GM12878 (cell line): ENCODE measurements at regions of chr1 and their contacts with region 1.

Region 1: DNA sequence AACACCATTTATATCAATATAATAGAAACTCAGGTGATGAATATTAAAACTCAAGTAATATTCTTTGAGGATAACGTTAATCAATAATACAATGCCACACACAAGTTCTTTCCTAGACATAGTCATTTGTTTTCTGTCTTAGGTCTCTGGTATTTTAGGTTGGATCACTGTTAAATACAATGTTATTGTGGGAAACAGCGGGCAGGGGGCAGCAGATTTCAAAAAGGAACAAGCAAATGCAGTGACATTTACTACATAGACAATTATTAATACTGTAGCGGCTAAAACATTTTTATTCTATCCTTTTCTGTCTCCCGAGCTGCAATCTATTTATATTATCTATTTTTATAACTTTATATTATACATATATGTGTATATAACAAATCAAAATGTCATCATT is 186.4 kb upstream of the ZNHIT6 start:
- DNase-seq: peak; percentile 3
- ATAC-seq: peak; percentile 76
- H3K4me3 ChIP-seq: no peak overlapping the region
- H3K27ac ChIP-seq: no peak overlapping the region
- H3K4me1 ChIP-seq: no peaks in the 10 kb centered on the region
- H3K27me3 ChIP-seq: no peaks in the 10 kb centered on the region
- CTCF ChIP-seq: peak; percentile 44 to 50 (median 48); a peak in 5 of 6 replicates
- EP300 ChIP-seq: no peak
- POLR2A ChIP-seq: no peak
- RAD21 ChIP-seq: peak; percentile 65

Region 2: DNA sequence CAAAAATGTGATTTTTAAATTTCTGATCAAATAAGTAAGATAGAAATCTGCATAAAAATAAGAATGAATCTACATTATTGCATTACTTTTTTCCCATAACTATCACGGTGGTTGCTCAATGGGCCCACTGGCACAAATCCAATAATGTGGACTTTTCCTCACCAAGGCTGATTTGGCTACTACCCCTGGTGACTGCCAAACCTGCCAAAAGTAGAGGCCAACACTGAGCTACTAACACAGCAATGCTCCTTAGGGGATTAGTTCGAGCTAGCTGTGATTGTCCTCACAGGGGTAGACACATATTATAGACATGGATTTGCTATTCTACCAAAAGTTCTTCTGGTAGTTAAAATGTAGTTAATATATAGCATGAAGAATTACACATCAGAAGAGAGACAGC is 78.7 kb before region 1 on chr1:
- CTCF ChIA-PET with region 1: no interaction called
- POLR2A ChIA-PET with region 1: no interaction called
- RAD21 ChIA-PET with region 1: no interaction called
- SMC1A ChIA-PET with region 1: no interaction called
- in situ Hi-C with region 1: no loop called
- intact Hi-C with region 1: loop called (anchors 2 kb)
- DNase-seq: no peak
- ATAC-seq: no peak
- H3K4me3 ChIP-seq: no peak overlapping the region
- H3K27ac ChIP-seq: no peak overlapping the region
- H3K4me1 ChIP-seq: no peaks in the 10 kb centered on the region
- H3K27me3 ChIP-seq: no peaks in the 10 kb centered on the region
- CTCF ChIP-seq: no peak
- EP300 ChIP-seq: no peak
- POLR2A ChIP-seq: no peak
- RAD21 ChIP-seq: no peak

Region 3: GRCh38 chr1:85838238-85838637 is 56.4 kb before region 1 on chr1:
- CTCF ChIA-PET with region 1: no interaction called
- POLR2A ChIA-PET with region 1: no interaction called
- RAD21 ChIA-PET with region 1: no interaction called
- SMC1A ChIA-PET with region 1: no interaction called
- in situ Hi-C with region 1: no loop called
- intact Hi-C with region 1: no loop called
- DNase-seq: peak; percentile 27
- ATAC-seq: peak; percentile 94
- H3K4me3 ChIP-seq: no peak overlapping the region
- H3K27ac ChIP-seq: no peak overlapping the region
- H3K4me1 ChIP-seq: peaks cover 4% of the 10 kb centered on the region; the same call in 1 of the 2 replicates
- H3K27me3 ChIP-seq: no peaks in the 10 kb centered on the region
- CTCF ChIP-seq: no peak
- EP300 ChIP-seq: peak in 1 of 2 experiments; percentile 53; a peak in 1 of 4 replicates
- POLR2A ChIP-seq: no peak
- RAD21 ChIP-seq: no peak

Region 4: DNA sequence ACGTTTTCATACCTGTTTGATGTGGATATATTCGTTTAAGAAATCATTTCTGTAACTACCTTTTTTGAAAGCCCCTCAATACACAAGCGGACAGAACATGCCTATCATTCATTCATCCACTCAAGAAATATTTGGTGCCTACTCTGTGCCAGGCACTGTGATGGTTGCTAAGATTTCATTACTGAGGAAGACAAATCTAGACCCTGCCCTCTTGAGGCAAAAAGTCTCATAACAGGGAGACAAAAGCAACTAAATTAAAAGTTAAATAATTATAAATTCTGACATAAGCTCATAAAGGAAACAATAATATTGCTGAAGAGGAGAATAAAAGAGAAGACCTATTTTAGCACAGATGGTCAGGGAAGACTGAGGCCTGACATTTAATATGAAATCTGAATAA is 17.1 kb after region 1 on chr1:
- CTCF ChIA-PET with region 1: interaction called, 3 read pairs
- POLR2A ChIA-PET with region 1: no interaction called
- RAD21 ChIA-PET with region 1: interaction called, 3 read pairs
- SMC1A ChIA-PET with region 1: no interaction called
- in situ Hi-C with region 1: no loop called
- intact Hi-C with region 1: loop called (anchors 2 kb)
- DNase-seq: no peak
- ATAC-seq: no peak
- H3K4me3 ChIP-seq: no peak overlapping the region
- H3K27ac ChIP-seq: no peak overlapping the region
- H3K4me1 ChIP-seq: no peaks in the 10 kb centered on the region
- H3K27me3 ChIP-seq: no peaks in the 10 kb centered on the region
- CTCF ChIP-seq: peak in 2 of 3 experiments; percentile 7 to 12; a peak in 1 of 6 replicates
- EP300 ChIP-seq: no peak
- POLR2A ChIP-seq: no peak
- RAD21 ChIP-seq: peak; percentile 34